ENCODE measurements at regions of chr2 and their contacts with region 1.

Region 1: DNA sequence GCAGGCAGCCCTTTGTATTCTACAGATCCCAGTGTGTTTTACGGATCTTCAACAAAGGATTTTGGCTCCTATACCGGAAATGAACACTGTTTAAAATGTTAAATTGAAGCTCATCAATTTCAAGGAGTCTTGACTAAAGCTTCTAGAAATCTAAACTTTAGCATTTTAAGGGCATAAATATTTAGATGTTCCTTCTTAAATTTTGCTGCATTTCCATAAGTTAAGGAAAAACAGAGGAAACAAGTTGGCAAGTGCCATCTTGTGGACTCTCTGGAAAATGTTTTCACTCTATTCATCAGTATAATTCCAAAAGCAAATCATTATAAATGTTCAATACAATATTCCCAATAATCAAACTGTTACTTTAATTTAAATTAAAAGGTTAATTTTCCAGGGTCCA is 19.6 kb downstream of the CHN1 start:
- DNase-seq: peak; percentile 14
- ATAC-seq: no peak
- H3K4me3 ChIP-seq: no peak overlapping the region
- H3K27ac ChIP-seq: no peak overlapping the region
- H3K4me1 ChIP-seq: no peaks in the 10 kb centered on the region
- H3K27me3 ChIP-seq: no peaks in the 10 kb centered on the region; a peak in 1 of 5 replicates
- CTCF ChIP-seq: peak; percentile 50
- EP300 ChIP-seq: no peak
- POLR2A ChIP-seq: no peak
- RAD21 ChIP-seq: peak; percentile 20; the same call in 1 of the 2 replicates

Region 2: GRCh38 chr2:174699993-174700766 is 285.4 kb before region 1 on chr2:
- CTCF ChIA-PET with region 1: interaction called, 3 read pairs
- POLR2A ChIA-PET with region 1: no interaction called
- in situ Hi-C with region 1: no loop called
- intact Hi-C with region 1: loop called (anchors 5 kb)
- DNase-seq: peak; percentile 40
- ATAC-seq: peak; percentile 32; the same call in 2 of the 3 replicates
- H3K4me3 ChIP-seq: no peak overlapping the region
- H3K27ac ChIP-seq: no peak overlapping the region
- H3K4me1 ChIP-seq: no peaks in the 10 kb centered on the region
- H3K27me3 ChIP-seq: peaks cover 0 to 3% of the 10 kb centered on the region in 2 experiments; a peak in 1 of 5 replicates
- CTCF ChIP-seq: peak; percentile 68
- EP300 ChIP-seq: no peak
- POLR2A ChIP-seq: no peak
- RAD21 ChIP-seq: 0 out of 2 replicates have a peak, but pooled peaks have one; percentile 30

Region 3: GRCh38 chr2:174771631-174772471 is 213.8 kb before region 1 on chr2:
- CTCF ChIA-PET with region 1: interaction called, 28 read pairs
- POLR2A ChIA-PET with region 1: no interaction called
- in situ Hi-C with region 1: loop called (anchors 5 kb)
- intact Hi-C with region 1: loop called (anchors 1 kb)
- DNase-seq: peak; percentile 64
- ATAC-seq: peak; percentile 99
- H3K4me3 ChIP-seq: peak overlapping the region; percentile 4 to 53 (median 27); a peak in 5 of 6 replicates
- H3K27ac ChIP-seq: no peak overlapping the region
- H3K4me1 ChIP-seq: peaks cover 8% of the 10 kb centered on the region
- H3K27me3 ChIP-seq: peaks cover 1 to 32% of the 10 kb centered on the region in 2 experiments; a peak in 2 of 5 replicates
- CTCF ChIP-seq: peak; percentile 94
- EP300 ChIP-seq: no peak
- POLR2A ChIP-seq: no peak
- RAD21 ChIP-seq: peak; percentile 85

Region 4: DNA sequence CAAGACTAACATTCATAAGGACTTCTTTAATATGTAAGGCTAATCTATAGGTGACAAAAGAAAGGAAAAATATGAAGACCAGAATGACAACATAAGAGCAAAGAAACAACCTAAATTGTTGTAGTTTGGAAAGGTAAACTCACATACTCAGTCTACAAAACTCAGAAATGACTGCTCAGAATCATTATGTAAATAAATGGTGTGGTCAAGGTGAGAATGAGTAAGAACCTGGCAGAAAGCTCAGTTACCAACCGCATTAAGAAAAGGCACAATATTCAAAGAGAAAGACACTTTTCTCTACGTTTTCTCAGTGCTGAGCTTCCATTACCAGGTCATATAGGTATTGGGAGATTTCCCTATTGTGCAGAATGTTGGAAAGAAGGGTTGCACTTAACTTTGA is 166.6 kb after region 1 on chr2:
- CTCF ChIA-PET with region 1: no interaction called
- POLR2A ChIA-PET with region 1: no interaction called
- in situ Hi-C with region 1: no loop called
- intact Hi-C with region 1: no loop called
- DNase-seq: no peak
- ATAC-seq: no peak
- H3K4me3 ChIP-seq: no peak overlapping the region
- H3K27ac ChIP-seq: no peak overlapping the region
- H3K4me1 ChIP-seq: peaks cover 10% of the 10 kb centered on the region
- H3K27me3 ChIP-seq: no peaks in the 10 kb centered on the region
- CTCF ChIP-seq: no peak
- EP300 ChIP-seq: no peak
- POLR2A ChIP-seq: no peak
- RAD21 ChIP-seq: no peak

Region 5: GRCh38 chr2:175282886-175283285 is 297.3 kb after region 1 on chr2:
- CTCF ChIA-PET with region 1: no interaction called
- POLR2A ChIA-PET with region 1: no interaction called
- in situ Hi-C with region 1: no loop called
- intact Hi-C with region 1: no loop called
- DNase-seq: no peak
- ATAC-seq: no peak
- H3K4me3 ChIP-seq: no peak overlapping the region
- H3K27ac ChIP-seq: no peak overlapping the region
- H3K4me1 ChIP-seq: no peaks in the 10 kb centered on the region
- H3K27me3 ChIP-seq: peaks cover 0 to 5% of the 10 kb centered on the region in 2 experiments; a peak in 2 of 5 replicates
- CTCF ChIP-seq: no peak
- EP300 ChIP-seq: no peak
- POLR2A ChIP-seq: no peak
- RAD21 ChIP-seq: no peak

Measured in HepG2 (cell line).